ENCODE measurements at regions of chr17 and their contacts with region 1.

Region 1: GRCh38 chr17:40309031-40309948 is at the start of gene RARA:
- DNase-seq: peak in 5 of 9 experiments; percentile 45 to 73 (median 55)
- ATAC-seq: peak; percentile 50
- H3K4me3 ChIP-seq: peak within 1 kb of the TSS; percentile 49 to 58
- H3K4me3 Mint-ChIP-seq: no peak within 1 kb of the TSS
- H3K27ac ChIP-seq: peak within 1 kb of the TSS in 1 of 2 experiments; percentile 21
- H3K27ac Mint-ChIP-seq: peak within 1 kb of the TSS; percentile 60
- H3K4me1 ChIP-seq: peaks cover 73% of the 10 kb centered on the region
- H3K4me1 Mint-ChIP-seq: peaks cover 15% of the 10 kb centered on the region
- H3K27me3 ChIP-seq: no peaks in the 10 kb centered on the region
- H3K27me3 Mint-ChIP-seq: no peaks in the 10 kb centered on the region
- CTCF ChIP-seq: no peak
- total RNA-seq, gene RARA: 133 TPM

Region 2: GRCh38 chr17:40209404-40210093 is 99.7 kb before region 1 on chr17:
- CTCF ChIA-PET with region 1: no interaction called
- POLR2A ChIA-PET with region 1: no interaction called
- intact Hi-C with region 1: no loop called
- DNase-seq: no peak
- ATAC-seq: no peak
- H3K4me3 ChIP-seq: no peak overlapping the region
- H3K4me3 Mint-ChIP-seq: no peak overlapping the region
- H3K27ac ChIP-seq: no peak overlapping the region
- H3K27ac Mint-ChIP-seq: no peak overlapping the region
- H3K4me1 ChIP-seq: no peaks in the 10 kb centered on the region
- H3K4me1 Mint-ChIP-seq: no peaks in the 10 kb centered on the region
- H3K27me3 ChIP-seq: no peaks in the 10 kb centered on the region
- H3K27me3 Mint-ChIP-seq: no peaks in the 10 kb centered on the region
- CTCF ChIP-seq: no peak

Region 3: DNA sequence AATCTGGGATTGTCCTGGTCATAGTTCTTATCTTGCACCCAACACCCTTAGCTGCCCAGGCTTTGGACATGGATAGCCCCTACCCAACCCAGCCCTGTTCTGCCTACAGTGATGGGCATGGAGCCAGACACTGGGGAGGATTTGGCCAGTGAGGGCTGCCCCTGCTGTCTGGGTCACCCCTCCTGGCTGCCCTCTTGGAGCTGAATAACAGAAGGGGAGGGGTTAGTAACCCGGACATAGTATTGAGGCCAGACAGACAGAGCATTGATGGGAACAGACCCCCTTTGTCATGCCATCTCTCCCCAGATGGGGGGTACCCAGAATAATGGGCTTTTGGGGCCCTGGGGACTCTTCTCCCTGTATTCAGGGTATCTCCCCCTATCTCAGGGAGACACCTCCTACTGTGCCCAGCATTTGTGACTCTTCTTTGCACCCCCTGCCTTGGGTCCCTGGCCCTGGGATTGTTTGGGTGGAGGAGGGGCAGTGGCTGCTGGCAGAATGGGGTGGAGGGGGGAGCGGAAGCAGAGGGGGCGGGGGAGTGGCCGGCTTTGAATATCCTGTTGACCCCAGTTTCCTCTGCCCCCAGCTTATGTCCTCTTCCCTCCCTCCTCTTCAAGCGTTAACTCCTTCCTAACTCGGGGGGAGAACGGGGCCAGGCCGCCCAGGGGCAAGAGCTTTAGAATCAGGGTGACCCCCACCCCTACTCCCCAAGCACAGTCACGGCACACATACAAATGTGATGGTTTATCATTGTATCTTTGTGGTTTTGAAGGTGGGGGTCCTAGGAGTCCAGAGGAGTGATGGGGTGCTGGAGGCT is 38.2 kb after region 1 on chr17:
- CTCF ChIA-PET with region 1: interaction called, 1,103 read pairs
- POLR2A ChIA-PET with region 1: interaction called, 6 read pairs
- intact Hi-C with region 1: loop called in 1 of 2 experiments (anchors 2 kb)
- DNase-seq: peak in 2 of 9 experiments; percentile 9 to 49
- ATAC-seq: no peak
- H3K4me3 ChIP-seq: no peak overlapping the region
- H3K4me3 Mint-ChIP-seq: peak overlapping the region; percentile 32
- H3K27ac ChIP-seq: peak overlapping the region in 1 of 2 experiments; percentile 56
- H3K27ac Mint-ChIP-seq: peak overlapping the region; percentile 87
- H3K4me1 ChIP-seq: peaks cover 61% of the 10 kb centered on the region
- H3K4me1 Mint-ChIP-seq: peaks cover 69% of the 10 kb centered on the region
- H3K27me3 ChIP-seq: no peaks in the 10 kb centered on the region
- H3K27me3 Mint-ChIP-seq: no peaks in the 10 kb centered on the region
- CTCF ChIP-seq: no peak